Endothelial cell of umbilical vein (primary cell): ENCODE measurements at regions of chr6 and their contacts with region 1.

Region 1: GRCh38 chr6:134097114-134097707 is 44.8 kb upstream of the SLC2A12 start:
- DNase-seq: peak; percentile 65
- H3K4me3 ChIP-seq: no peak overlapping the region
- H3K27ac ChIP-seq: no peak overlapping the region
- H3K4me1 ChIP-seq: no peaks in the 10 kb centered on the region
- H3K27me3 ChIP-seq: peaks cover 21 to 27% of the 10 kb centered on the region in 2 experiments
- CTCF ChIP-seq: peak; percentile 41 to 46
- POLR2A ChIP-seq: no peak

Region 2: GRCh38 chr6:133568970-133569889 is 528.0 kb before region 1 on chr6:
- CTCF ChIA-PET with region 1: interaction called, 46 read pairs
- POLR2A ChIA-PET with region 1: no interaction called
- dilution Hi-C with region 1: no loop called
- intact Hi-C with region 1: loop called (anchors 1 kb)
- DNase-seq: peak; percentile 56
- H3K4me3 ChIP-seq: peak overlapping the region in 2 of 3 experiments; percentile 29 to 49
- H3K27ac ChIP-seq: no peak overlapping the region
- H3K4me1 ChIP-seq: peaks cover 5% of the 10 kb centered on the region
- H3K27me3 ChIP-seq: peaks cover 3 to 6% of the 10 kb centered on the region in 2 experiments
- CTCF ChIP-seq: peak; percentile 67 to 74
- POLR2A ChIP-seq: no peak

Region 3: DNA sequence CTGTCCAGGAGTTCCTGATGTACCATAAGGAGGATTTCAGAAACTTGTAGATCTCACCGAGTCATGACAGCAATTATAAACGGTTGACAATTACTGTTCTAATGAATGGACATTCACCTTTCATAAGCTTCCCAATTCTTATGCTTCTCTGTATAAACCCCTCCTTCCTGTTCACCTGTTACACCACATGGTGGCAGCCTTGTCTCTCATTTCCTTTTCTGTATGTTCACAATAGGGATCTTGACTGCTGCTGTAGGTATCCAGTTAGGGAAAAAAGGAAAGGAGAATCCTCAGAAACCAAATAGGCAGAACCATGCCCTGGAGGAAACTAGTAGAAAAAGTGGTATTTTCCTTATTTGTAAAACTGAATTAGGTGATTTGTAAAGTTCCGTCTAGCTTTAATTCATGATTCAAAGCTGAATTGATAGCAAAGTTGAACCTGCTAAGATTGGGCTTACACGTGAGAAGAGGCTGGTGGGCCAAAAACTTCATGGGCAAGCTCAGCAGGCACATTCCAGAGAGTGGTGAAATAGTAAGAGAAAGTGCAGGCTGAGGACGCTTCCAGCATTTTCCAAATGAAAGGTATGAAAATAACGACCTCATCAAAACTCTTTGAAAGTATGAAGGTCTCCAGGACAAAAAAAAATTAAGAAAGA is 173.1 kb before region 1 on chr6:
- CTCF ChIA-PET with region 1: interaction called, 983 read pairs
- POLR2A ChIA-PET with region 1: interaction called, 4 read pairs
- dilution Hi-C with region 1: no loop called
- intact Hi-C with region 1: loop called (anchors 1 kb)
- DNase-seq: peak; percentile 82
- H3K4me3 ChIP-seq: no peak overlapping the region
- H3K27ac ChIP-seq: no peak overlapping the region
- H3K4me1 ChIP-seq: no peaks in the 10 kb centered on the region
- H3K27me3 ChIP-seq: peaks cover 13 to 31% of the 10 kb centered on the region in 2 experiments
- CTCF ChIP-seq: peak; percentile 59 to 60
- POLR2A ChIP-seq: no peak

Region 4: GRCh38 chr6:133952815-133953633 is 144.2 kb before region 1 on chr6 and contains the start of gene TBPL1:
- CTCF ChIA-PET with region 1: interaction called, 26 read pairs
- POLR2A ChIA-PET with region 1: no interaction called
- dilution Hi-C with region 1: no loop called
- intact Hi-C with region 1: no loop called
- DNase-seq: peak; percentile 96
- H3K4me3 ChIP-seq: peak within 1 kb of the TSS; percentile 79 to 96 (median 86)
- H3K27ac ChIP-seq: peak within 1 kb of the TSS; percentile 88
- H3K4me1 ChIP-seq: peaks cover 21% of the 10 kb centered on the region
- H3K27me3 ChIP-seq: peaks cover 0 to 7% of the 10 kb centered on the region in 2 experiments
- CTCF ChIP-seq: no peak
- POLR2A ChIP-seq: peak; percentile 74
- total RNA-seq, gene TBPL1: 31.2 and 33.4 TPM in 2 replicates

Region 5: GRCh38 chr6:133991096-133991593 is 106.1 kb before region 1 on chr6:
- CTCF ChIA-PET with region 1: interaction called, 10 read pairs
- POLR2A ChIA-PET with region 1: no interaction called
- dilution Hi-C with region 1: no loop called
- intact Hi-C with region 1: no loop called
- DNase-seq: peak; percentile 80
- H3K4me3 ChIP-seq: no peak overlapping the region
- H3K27ac ChIP-seq: no peak overlapping the region
- H3K4me1 ChIP-seq: peaks cover 11% of the 10 kb centered on the region
- H3K27me3 ChIP-seq: no peaks in the 10 kb centered on the region
- CTCF ChIP-seq: no peak
- POLR2A ChIP-seq: no peak

Region 6: DNA sequence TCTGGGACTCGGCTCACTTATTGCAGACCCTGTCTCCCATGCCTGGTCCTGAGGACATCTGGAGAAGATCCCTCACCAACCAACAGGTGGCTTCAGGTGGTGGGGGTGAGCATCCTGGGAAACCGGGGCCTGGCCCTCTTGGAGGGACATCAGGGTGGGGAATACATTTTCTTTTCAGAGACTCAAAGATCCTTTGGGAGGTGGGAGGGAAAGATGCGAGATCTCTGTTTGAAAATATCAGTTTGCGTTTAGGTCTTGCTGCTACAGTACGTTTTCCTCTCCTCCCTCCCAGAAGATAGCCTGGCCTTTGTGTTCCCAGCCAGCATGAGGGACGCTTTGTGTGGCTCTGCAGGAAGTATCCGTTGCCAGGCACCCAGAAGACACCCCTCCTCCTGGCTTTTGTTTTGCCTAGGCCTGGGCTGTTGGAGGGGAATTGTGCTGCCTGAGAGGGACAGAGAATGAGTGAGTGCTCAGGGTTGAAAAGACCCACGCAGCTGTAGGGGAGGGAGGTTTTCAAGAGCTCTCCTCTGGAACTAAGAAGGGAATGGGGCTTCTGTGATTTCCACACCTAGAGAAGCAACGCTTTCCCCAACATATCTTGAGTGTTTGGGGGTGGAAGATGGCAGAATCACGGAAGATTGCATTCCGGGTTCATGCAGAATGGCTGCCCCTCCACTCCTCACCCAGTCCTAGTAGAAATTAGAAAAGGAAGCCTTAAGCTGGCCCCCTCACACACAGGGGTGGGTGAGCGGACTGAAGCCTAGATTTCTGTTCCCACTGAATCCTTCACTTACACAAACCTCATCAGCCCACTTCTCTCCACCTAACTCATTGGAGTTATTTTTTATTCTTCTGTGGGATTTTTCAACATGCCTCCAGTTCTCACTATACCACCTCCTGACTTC is 22.8 kb before region 1 on chr6:
- CTCF ChIA-PET with region 1: interaction called, 14 read pairs
- POLR2A ChIA-PET with region 1: no interaction called
- dilution Hi-C with region 1: no loop called
- intact Hi-C with region 1: no loop called
- DNase-seq: peak; percentile 33
- H3K4me3 ChIP-seq: no peak overlapping the region
- H3K27ac ChIP-seq: no peak overlapping the region
- H3K4me1 ChIP-seq: peaks cover 10% of the 10 kb centered on the region
- H3K27me3 ChIP-seq: peaks cover 4% of the 10 kb centered on the region in 2 experiments
- CTCF ChIP-seq: no peak
- POLR2A ChIP-seq: no peak